ENCODE measurements at regions of chr10 and their contacts with region 1.

Region 1: DNA sequence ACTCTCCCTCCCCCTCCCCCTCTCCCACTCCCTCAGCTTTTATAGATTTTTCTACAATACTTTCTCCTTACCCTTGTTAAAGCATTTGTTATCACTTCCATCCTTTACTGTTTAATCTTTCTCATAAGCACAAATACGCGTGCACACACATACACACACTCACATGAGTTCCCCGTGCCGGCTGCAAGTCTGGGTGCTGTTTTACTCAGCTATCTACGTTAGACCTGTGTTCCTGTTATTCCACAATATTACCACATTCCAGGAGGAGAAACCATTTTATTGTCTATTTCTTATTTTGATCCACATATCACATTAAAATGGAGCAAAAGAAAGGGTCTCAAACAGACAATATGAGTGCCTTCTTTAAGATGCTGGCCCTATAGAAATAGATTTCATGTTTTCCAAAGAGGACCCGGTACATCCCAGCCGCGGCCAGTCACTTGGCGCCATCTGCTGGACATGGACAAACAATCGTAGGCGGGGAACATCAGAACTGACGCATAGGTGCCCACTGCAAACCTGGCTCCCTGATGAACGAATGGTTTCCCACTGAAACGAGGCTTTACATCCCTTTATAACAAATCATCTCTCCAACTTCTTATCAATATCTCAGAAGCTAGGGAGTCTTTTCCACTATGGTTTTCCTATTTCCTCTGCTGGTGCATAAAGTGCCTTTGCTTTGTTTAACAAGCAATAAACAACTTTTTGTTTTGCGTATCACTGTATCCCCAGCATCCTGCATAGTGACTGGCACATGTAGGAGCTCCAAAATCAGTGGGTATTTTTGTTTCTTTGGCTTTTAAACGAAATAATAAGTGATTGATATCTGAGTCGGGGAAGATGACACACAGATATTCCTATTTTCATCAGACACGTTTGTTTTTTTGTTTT is 25.2 kb upstream of the OPTN start:
- DNase-seq: peak; percentile 49 to 81 (median 65)
- H3K4me3 ChIP-seq: no peak overlapping the region
- H3K27ac ChIP-seq: no peak overlapping the region
- H3K4me1 ChIP-seq: no peaks in the 10 kb centered on the region
- H3K27me3 ChIP-seq: no peaks in the 10 kb centered on the region
- CTCF ChIP-seq: peak; percentile 36 to 86 (median 66)
- POLR2A ChIP-seq: no peak

Region 2: DNA sequence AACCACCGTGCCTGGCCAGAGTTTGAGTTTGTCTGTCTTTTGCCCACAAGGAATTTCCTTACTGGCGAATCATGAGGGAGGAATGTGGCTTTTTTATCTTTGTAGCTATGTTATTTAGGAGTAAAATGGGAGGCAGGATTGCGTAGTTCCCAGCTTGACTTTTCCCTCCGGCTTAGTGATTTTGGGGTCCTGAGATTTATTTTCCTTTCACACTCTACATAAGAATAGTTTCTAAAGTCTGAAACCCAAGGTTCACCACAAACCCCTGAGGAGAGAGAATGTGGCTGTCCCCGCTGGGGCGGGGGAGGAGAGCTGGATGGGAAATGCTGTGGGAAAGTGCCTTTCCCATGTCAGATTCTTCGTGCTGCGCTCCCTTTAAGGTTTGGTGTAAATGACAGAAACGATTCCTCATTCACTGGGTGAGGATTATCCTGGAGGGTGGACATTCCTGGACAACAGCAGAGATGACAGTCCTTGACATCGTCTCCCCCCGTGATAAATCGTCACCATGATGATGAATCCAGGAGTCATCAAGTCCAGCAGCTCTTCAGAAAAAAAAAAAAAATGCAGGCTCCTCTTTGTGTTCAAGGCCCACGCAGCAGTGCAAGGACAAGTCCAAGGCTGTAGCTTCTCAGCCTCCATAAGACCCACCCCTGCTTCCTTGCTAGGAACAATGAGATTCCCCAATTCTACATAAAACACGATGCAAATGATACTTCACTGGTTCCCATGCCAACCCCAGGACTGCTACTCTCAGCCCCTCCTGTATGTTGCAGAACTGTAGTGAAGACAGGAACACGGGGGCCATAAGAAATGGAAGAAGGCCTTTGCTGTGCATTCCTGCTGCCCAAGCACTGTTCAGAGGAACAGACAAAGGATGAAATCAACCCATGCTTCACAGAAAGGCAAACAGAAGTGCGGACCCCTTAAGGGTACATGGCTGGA is 306.4 kb before region 1 on chr10:
- intact Hi-C with region 1: no loop called
- DNase-seq: peak in 3 of 7 donors; percentile 25 to 48 (median 43)
- H3K4me3 ChIP-seq: no peak overlapping the region
- H3K27ac ChIP-seq: no peak overlapping the region
- H3K4me1 ChIP-seq: peaks cover 10 to 13% of the 10 kb centered on the region in 2 donors
- H3K27me3 ChIP-seq: no peaks in the 10 kb centered on the region
- CTCF ChIP-seq: no peak
- POLR2A ChIP-seq: no peak

Region 3: DNA sequence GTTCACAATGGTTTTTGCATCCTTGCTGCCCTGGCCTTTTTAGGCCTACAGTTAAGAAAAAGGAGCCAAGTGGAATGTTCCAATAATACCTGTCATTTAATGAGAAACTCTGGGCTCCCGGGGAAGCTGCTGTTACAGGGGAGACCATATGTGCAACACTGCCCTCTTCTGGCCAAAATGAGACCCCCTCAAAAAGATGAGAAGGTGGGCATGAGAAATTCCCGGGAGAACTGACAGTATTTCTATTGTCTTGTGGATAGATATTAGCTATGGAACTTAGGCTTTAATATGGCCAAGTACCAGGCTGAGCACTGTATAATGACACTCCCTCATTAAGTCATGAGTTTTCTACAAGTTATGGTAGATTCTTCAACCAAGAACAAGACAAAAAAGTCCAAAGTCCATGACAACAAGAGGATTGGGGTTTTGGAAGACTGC is 172.7 kb before region 1 on chr10:
- intact Hi-C with region 1: loop called in 1 of 2 experiments (anchors 10 kb)
- DNase-seq: peak; percentile 21 to 77 (median 50)
- H3K4me3 ChIP-seq: no peak overlapping the region
- H3K27ac ChIP-seq: no peak overlapping the region
- H3K4me1 ChIP-seq: peaks cover 0 to 3% of the 10 kb centered on the region in 2 donors
- H3K27me3 ChIP-seq: no peaks in the 10 kb centered on the region
- CTCF ChIP-seq: peak; percentile 51 to 73 (median 64)
- POLR2A ChIP-seq: no peak

Region 4: GRCh38 chr10:13183625-13184024 is 108.8 kb after region 1 on chr10:
- intact Hi-C with region 1: no loop called
- DNase-seq: no peak
- H3K4me3 ChIP-seq: no peak overlapping the region
- H3K27ac ChIP-seq: no peak overlapping the region
- H3K4me1 ChIP-seq: no peaks in the 10 kb centered on the region
- H3K27me3 ChIP-seq: no peaks in the 10 kb centered on the region
- CTCF ChIP-seq: no peak
- POLR2A ChIP-seq: no peak